ENCODE measurements at regions of chr21 and their contacts with region 1.

Region 1: GRCh38 chr21:14591882-14592281 is 45.8 kb upstream of the SAMSN1 start:
- DNase-seq: peak in 1 of 4 experiments; percentile 36
- ATAC-seq: peak; percentile 74
- H3K4me3 ChIP-seq: no peak overlapping the region
- H3K27ac ChIP-seq: peak overlapping the region; percentile 8; the same call in 1 of the 3 replicates
- H3K4me1 ChIP-seq: no peaks in the 10 kb centered on the region; a peak in 2 of 5 replicates
- H3K27me3 ChIP-seq: no peaks in the 10 kb centered on the region
- CTCF ChIP-seq: no peak
- EP300 ChIP-seq: no peak
- POLR2A ChIP-seq: no peak
- RAD21 ChIP-seq: no peak

Region 2: DNA sequence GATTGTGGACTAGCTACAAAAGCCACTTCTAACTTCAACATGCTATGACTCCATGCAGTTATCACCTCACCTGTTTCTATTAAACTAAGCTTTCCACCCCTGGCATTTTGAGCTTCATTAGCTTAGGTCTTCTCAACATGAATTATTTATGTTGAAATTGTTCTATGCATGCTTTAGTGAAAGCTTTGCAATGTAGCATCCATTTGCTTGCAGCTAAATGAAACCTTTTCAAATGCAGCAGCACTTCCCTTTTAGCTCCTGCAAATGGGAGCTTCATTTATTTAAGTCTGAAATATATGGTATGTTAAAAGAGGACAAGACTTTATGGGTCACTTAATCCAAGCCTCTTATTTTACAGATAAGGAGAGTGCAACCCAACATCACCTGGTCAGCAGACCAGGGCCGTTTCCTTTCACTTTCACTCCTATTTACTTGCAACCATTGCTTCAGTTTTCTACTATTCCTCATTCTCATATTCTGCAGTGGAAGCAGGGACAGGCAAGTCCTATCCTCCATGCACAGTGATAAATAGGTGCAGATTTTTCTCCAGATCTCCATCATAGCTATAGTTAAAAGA is 10.6 kb after region 1 on chr21:
- CTCF ChIA-PET with region 1: no interaction called
- POLR2A ChIA-PET with region 1: interaction called, 11 read pairs
- in situ Hi-C with region 1: no loop called
- intact Hi-C with region 1: no loop called
- DNase-seq: peak in 1 of 4 experiments; percentile 32
- ATAC-seq: peak; percentile 46
- H3K4me3 ChIP-seq: no peak overlapping the region
- H3K27ac ChIP-seq: peak overlapping the region; percentile 39; the same call in 2 of the 3 replicates
- H3K4me1 ChIP-seq: peaks cover 7 to 41% of the 10 kb centered on the region in 2 experiments; a peak in 4 of 5 replicates
- H3K27me3 ChIP-seq: no peaks in the 10 kb centered on the region
- CTCF ChIP-seq: no peak
- EP300 ChIP-seq: no peak
- POLR2A ChIP-seq: no peak
- RAD21 ChIP-seq: no peak

Measured in K562 (cell line).